WTC11 (cell line): ENCODE measurements at regions of chr16 and their contacts with region 1.

Region 1: DNA sequence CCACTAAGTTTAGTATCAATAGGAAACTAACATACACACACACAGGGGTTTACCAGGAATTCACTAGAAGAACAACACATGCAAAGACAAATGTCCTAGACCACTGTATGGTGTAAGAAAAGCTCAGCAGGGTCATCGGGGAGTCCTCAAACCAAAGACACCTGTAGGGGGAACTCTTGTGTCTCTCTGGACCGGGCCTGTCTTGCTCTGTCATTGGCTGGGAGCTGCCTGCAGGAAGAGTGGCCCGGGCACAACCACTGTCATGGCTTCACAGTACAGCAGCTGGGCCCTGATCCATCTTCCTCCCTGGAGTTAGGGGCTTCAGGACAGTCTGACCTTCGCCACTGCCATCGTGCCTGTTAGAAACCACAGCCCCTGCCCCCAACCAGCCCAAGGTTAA is 263.6 kb upstream of the DYNLRB2 start:
- DNase-seq: peak; percentile 63
- ATAC-seq: peak; percentile 100
- H3K4me3 Mint-ChIP-seq: no peak overlapping the region
- H3K27ac Mint-ChIP-seq: no peak overlapping the region
- H3K4me1 Mint-ChIP-seq: no peaks in the 10 kb centered on the region
- H3K27me3 Mint-ChIP-seq: no peaks in the 10 kb centered on the region; the same call in 1 of the 2 replicates
- CTCF ChIP-seq: no peak

Region 2: DNA sequence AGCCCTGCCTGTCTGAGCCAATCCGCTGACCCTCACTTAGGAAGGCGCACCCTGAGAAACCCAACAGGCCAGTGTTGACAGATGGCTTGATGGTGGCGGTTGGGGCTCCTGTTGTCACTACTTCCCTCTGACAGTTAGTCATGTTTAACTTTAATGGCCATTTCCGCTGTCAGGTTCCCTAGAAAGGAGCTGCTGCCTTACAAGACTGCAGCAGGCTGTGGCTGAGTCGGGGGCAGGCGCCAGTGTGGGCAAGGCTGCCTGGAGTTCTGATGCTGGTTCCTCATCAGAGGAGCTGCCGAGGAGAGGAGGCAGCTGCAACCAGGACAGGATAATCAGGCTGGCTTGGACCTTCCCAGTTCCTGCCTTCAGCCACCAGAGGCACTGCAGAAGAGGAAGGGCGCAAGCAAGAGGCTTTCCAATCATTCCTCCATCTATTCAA is 40.4 kb after region 1 on chr16:
- CTCF ChIA-PET with region 1: interaction called, 10 read pairs
- POLR2A ChIA-PET with region 1: no interaction called
- DNase-seq: peak; percentile 50
- ATAC-seq: peak; percentile 97
- H3K4me3 Mint-ChIP-seq: no peak overlapping the region
- H3K27ac Mint-ChIP-seq: no peak overlapping the region
- H3K4me1 Mint-ChIP-seq: no peaks in the 10 kb centered on the region
- H3K27me3 Mint-ChIP-seq: no peaks in the 10 kb centered on the region
- CTCF ChIP-seq: no peak

Region 3: GRCh38 chr16:80369138-80369958 is 92.2 kb after region 1 on chr16:
- CTCF ChIA-PET with region 1: interaction called, 28 read pairs
- POLR2A ChIA-PET with region 1: no interaction called
- DNase-seq: peak; percentile 45
- ATAC-seq: peak; percentile 97
- H3K4me3 Mint-ChIP-seq: no peak overlapping the region
- H3K27ac Mint-ChIP-seq: no peak overlapping the region
- H3K4me1 Mint-ChIP-seq: peaks cover 6% of the 10 kb centered on the region; the same call in 1 of the 2 replicates
- H3K27me3 Mint-ChIP-seq: no peaks in the 10 kb centered on the region
- CTCF ChIP-seq: no peak